Psoas muscle (tissue), 8 donors: ENCODE measurements at regions of chr19 and their contacts with region 1.

Region 1: DNA sequence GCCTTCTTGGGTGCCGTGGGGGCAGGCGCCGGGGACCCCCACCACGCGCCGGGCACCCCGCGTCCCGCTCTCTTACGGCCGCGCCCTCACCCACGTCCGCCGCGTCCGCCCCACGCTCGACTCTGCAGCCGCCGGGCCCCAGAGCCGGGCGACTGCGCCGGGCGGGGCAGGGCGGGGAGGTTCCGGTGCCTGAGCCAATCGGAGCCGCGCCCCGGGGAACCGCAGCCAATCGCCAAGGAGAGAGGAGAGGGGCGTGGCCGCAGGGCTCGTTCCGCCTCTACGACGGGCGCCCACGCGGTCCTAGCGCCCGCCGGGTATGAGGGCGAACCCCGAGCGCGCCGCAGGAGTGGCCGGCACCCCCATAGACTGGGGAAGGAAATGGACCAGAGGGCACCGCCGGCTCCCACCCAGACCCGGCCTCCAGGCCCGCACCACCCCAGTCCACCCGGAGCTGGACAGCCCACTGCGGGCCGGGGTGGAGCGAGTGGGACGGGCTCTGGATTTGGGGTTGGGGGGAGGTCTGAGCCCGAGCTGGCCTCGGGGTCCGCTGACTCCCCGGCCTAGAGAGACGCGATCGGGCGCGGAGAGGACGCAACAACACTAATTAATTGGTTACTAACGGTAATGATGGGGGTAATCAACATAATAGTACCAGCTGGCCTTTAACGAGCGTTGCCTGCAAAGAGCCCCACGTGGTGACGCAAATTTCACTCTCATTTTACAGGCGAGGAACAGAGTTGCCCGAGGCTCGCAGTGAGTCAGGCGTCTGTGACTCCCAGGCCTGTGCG is at the start of gene MFSD12:
- DNase-seq: peak; percentile 97 to 98
- ATAC-seq: peak; percentile 98
- H3K4me3 ChIP-seq: peak within 1 kb of the TSS; percentile 75
- H3K27ac ChIP-seq: peak within 1 kb of the TSS; percentile 76
- H3K4me1 ChIP-seq: peaks cover 8% of the 10 kb centered on the region
- H3K27me3 ChIP-seq: no peaks in the 10 kb centered on the region
- CTCF ChIP-seq: no peak
- total RNA-seq, gene MFSD12: 16.3 to 25.2 (median 21.5) TPM

Region 2: GRCh38 chr19:3626473-3627350 is 69.1 kb after region 1 on chr19 and contains the start of gene CACTIN:
- intact Hi-C with region 1: loop called in 1 of 2 experiments (anchors 2 kb)
- DNase-seq: peak; percentile 99 to 100
- ATAC-seq: peak; percentile 97 to 99 (median 98)
- H3K4me3 ChIP-seq: peak within 1 kb of the TSS; percentile 100
- H3K27ac ChIP-seq: peak within 1 kb of the TSS; percentile 96
- H3K4me1 ChIP-seq: peaks cover 15% of the 10 kb centered on the region
- H3K27me3 ChIP-seq: no peaks in the 10 kb centered on the region
- CTCF ChIP-seq: no peak
- total RNA-seq, gene CACTIN: 15.2 to 21.4 (median 18.2) TPM

Region 3: DNA sequence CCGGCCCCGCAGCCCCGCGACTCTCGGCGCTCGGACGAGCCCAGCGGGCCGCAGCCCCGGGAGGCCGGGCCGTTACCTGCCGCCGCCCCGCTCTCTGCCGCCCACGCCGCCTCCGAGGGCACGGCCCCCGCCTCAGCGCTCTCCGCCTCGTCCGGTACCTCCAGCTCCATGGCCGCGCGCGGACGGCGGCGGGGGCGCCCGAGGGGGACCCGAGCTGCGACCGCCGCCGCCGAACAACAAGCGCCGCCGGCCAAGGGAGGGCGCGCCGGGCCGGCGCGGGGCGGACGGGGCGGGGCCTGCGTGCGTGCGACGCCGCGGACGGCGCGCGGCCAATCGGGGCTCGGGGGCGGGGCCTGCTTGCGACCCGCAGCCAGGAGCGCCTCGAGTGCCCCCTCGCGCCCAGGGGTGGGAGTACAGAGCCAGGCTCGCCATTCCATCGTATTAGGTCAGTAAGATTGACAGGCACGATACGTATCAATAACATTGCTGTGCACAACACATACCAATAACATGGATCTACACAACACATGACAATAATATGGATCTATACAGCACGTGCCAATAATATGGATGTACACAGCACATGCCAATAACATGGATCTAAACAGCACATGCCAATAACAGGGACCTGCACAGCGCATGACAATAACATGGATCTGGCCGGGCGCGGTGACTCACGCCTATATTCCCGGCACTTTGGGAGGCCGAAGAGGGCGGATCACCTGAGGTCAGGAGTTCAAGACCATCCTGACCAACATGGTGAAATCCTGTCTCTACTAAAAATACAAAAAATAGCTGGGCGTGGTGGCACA is 142.8 kb after region 1 on chr19 and contains the start of gene PIP5K1C:
- intact Hi-C with region 1: loop called in 1 of 2 experiments (anchors 10 kb)
- DNase-seq: peak; percentile 90 to 95
- ATAC-seq: peak; percentile 97 to 99 (median 98)
- H3K4me3 ChIP-seq: peak within 1 kb of the TSS; percentile 72
- H3K27ac ChIP-seq: peak within 1 kb of the TSS; percentile 68
- H3K4me1 ChIP-seq: peaks cover 6% of the 10 kb centered on the region
- H3K27me3 ChIP-seq: no peaks in the 10 kb centered on the region
- CTCF ChIP-seq: peak; percentile 92
- total RNA-seq, gene PIP5K1C: 13.5 to 22.4 (median 17.9) TPM